Esophagus muscularis mucosa (tissue), 4 donors: ENCODE measurements at regions of chr10 and their contacts with region 1.

Region 1: DNA sequence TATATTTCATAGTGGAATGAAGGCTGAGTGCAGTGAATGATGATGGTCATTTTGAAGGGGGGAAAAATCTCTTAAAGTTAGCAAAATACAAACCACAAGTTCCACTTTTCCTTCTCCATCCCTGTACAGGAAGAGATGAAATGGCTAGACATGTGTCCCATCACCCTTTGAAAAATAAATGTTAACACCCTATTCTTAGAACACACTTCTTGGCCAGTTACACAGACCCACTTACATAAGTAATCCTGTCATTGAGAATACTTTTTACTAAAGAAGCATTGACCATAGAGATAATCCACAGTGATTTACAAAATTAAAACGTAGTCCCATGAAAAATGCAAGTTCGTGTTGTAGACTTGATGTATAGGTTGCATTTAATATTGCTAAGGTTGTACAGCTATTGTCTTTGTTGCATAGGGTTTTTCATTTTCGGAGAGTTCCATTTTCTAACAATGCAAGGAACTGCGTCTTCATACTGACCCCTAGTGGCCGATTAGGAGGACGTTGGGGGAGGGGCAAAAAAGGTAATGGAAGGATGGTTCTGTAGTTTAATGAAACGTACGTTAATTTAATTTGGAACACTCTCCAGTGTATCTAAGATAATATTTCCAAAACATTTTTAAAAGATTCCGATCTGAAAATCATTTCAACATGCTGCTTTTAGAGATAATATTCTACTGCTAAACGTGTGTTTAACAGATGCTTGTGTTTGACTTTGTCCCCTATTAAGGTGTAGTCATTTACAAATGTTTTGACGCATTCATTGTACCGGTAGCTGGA is 60.9 kb downstream of the ARMC3 start:
- DNase-seq: no peak
- H3K4me3 ChIP-seq: no peak overlapping the region
- H3K27ac ChIP-seq: no peak overlapping the region
- H3K4me1 ChIP-seq: peaks cover 0 to 10% (median 8%) of the 10 kb centered on the region in 4 donors
- H3K27me3 ChIP-seq: no peaks in the 10 kb centered on the region
- CTCF ChIP-seq: peak; percentile 87 to 92 (median 90)
- EP300 ChIP-seq: no peak
- POLR2A ChIP-seq: no peak

Region 2: DNA sequence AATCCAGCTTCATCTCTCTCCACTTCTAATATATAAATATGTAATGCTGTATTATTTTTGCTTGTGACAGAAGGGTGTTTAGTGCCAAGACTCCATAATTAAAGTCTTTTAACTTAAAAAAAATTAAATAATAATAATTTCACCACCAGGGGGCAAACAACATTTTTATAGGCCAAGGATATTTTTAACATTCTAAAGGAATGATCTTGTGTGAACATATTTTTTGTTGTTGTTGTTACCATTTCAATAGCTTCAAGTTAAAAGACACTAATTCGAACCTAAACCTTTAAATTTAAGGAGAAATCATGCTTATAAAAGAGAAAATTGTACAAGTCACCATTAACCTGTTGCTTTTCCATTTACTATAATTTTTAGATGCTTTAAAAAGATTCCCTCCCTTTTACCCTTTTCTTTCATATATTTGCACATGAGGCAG is 977.8 kb before region 1 on chr10:
- intact Hi-C with region 1: loop called (anchors 2 kb)
- DNase-seq: no peak
- H3K4me3 ChIP-seq: no peak overlapping the region
- H3K27ac ChIP-seq: no peak overlapping the region
- H3K4me1 ChIP-seq: peaks cover 0 to 4% (median 0%) of the 10 kb centered on the region in 4 donors
- H3K27me3 ChIP-seq: no peaks in the 10 kb centered on the region
- CTCF ChIP-seq: peak; percentile 27 to 58 (median 45)
- EP300 ChIP-seq: no peak
- POLR2A ChIP-seq: no peak

Region 3: DNA sequence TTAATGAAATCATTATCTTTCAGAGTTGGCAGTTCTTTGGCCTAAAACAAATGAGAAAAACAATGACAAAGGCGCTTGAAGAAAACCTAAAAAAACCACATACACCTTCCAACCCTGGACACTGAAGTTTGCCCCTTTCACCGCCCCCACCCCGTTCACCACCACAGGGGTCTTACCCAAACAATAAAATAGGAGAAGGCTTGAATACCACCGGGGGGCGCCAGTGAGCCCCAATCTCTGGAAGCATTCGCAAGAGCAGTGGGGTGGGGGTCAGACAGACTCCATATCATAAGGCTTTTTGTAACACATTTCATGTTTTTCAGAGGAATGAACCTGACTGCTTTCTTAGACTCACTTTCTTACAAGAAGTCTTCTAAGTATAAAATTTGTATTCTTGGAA is 438.0 kb before region 1 on chr10:
- intact Hi-C with region 1: loop called (anchors 10 kb)
- DNase-seq: no peak
- H3K4me3 ChIP-seq: no peak overlapping the region
- H3K27ac ChIP-seq: no peak overlapping the region
- H3K4me1 ChIP-seq: peaks cover 0 to 30% (median 23%) of the 10 kb centered on the region in 4 donors
- H3K27me3 ChIP-seq: no peaks in the 10 kb centered on the region
- CTCF ChIP-seq: peak; percentile 33 to 55 (median 39)
- EP300 ChIP-seq: no peak
- POLR2A ChIP-seq: no peak

Region 4: DNA sequence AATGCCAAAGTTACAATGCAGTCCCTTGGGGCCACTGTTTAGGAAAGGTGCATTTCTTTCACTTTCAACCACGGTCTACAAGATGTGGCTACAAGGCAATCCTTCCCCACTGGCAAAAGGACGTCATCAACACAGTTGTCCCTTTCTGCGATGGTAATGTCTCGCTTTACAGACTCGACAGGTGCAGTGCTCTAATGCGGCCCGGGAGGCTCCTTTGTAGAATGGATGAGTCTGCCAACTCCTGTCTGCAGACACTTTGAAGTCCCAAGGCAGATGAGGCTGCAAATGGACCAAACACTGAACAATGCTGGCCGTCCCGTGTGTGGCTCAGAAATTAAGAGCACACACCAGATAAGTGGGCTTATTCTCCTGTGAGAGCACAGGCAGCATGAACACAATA is 408.1 kb before region 1 on chr10:
- intact Hi-C with region 1: loop called (anchors 10 kb)
- DNase-seq: no peak
- H3K4me3 ChIP-seq: no peak overlapping the region
- H3K27ac ChIP-seq: no peak overlapping the region
- H3K4me1 ChIP-seq: no peaks in the 10 kb centered on the region
- H3K27me3 ChIP-seq: no peaks in the 10 kb centered on the region
- CTCF ChIP-seq: no peak
- EP300 ChIP-seq: no peak
- POLR2A ChIP-seq: no peak

Region 5: GRCh38 chr10:23081891-23082290 is 93.1 kb after region 1 on chr10:
- intact Hi-C with region 1: no loop called
- DNase-seq: no peak
- H3K4me3 ChIP-seq: no peak overlapping the region
- H3K27ac ChIP-seq: no peak overlapping the region
- H3K4me1 ChIP-seq: peaks cover 7 to 12% (median 12%) of the 10 kb centered on the region in 4 donors
- H3K27me3 ChIP-seq: no peaks in the 10 kb centered on the region
- CTCF ChIP-seq: peak in 1 of 3 experiments; percentile 33
- EP300 ChIP-seq: no peak
- POLR2A ChIP-seq: no peak

Region 6: DNA sequence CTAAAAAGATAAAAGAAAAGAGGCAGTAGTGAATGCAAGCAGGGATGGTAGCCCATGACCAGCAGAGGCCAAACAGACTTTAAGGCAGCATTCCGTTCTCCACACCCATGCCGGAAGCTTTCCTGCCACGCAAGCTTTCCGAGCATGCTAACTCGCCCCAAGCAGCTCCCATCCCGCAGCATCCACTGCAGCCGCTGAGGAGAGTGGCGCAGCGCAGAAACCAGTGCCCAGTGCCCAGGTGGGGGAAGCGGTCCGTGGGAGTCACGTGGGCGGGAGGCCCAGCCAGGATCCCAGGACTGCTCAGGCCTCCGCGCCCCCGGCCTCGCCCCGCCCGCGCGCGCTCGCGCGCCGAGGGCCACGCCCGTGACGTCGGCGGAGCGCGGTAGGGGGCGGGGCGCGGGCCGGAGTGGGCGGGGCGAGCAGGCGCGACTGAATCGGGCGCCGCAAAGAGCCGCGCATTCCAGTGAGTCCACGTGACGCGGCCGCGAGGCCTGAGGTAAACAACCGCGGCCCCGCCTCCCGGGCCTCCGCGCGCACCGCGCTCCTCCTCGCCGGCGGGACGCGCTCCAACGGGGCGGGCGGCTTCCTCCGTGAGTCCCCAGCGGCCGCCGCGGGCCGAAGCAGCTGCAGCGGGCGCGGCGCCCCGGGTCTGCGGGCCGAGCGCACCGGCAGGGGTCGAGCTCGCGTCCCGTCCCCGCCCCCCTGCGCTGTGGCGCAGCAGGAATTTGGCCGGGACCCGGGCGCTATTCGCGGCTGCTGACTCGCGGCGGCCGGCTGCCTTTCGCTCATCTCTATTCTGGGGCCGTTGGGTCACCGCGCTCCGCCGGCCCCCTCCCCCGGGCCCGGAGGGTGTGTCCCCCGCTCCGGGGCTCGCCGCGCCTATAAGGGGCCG is 450.0 kb after region 1 on chr10 and contains the start of gene OTUD1:
- intact Hi-C with region 1: no loop called
- DNase-seq: peak; percentile 98
- H3K4me3 ChIP-seq: peak within 1 kb of the TSS; percentile 82 to 95 (median 92)
- H3K27ac ChIP-seq: peak within 1 kb of the TSS; percentile 96 to 97 (median 96)
- H3K4me1 ChIP-seq: peaks cover 24 to 44% (median 35%) of the 10 kb centered on the region in 4 donors
- H3K27me3 ChIP-seq: no peaks in the 10 kb centered on the region
- CTCF ChIP-seq: peak; percentile 3 to 38 (median 28)
- EP300 ChIP-seq: no peak
- POLR2A ChIP-seq: peak; percentile 53
- total RNA-seq, gene OTUD1: 9.3 to 19.1 (median 11.4) TPM